ENCODE measurements at regions of chr16 and their contacts with region 1.

Region 1: GRCh38 chr16:4846891-4847773 is at the starts of genes GLYR1 and UBN1:
- DNase-seq: peak; percentile 97 to 99 (median 99)
- H3K4me3 ChIP-seq: peak within 1 kb of the TSS; percentile 73 to 100 (median 97)
- H3K27ac ChIP-seq: peak within 1 kb of the TSS; percentile 67 to 97 (median 91)
- H3K27me3 ChIP-seq: no peaks in the 10 kb centered on the region
- CTCF ChIP-seq: peak in 27 of 56 donors; percentile 3 to 51 (median 17)
- total RNA-seq, gene GLYR1: 91.8 to 145 (median 122) TPM
- total RNA-seq, gene UBN1: 21.8 to 36.9 (median 28.7) TPM

Region 2: GRCh38 chr16:4734063-4734729 is 112.9 kb before region 1 on chr16 and contains the starts of genes ANKS3 and DNAAF8:
- intact Hi-C with region 1: loop called in 1 of 2 experiments (anchors 10 kb)
- DNase-seq: peak; percentile 90 to 98 (median 98)
- H3K4me3 ChIP-seq: peak within 1 kb of the TSS; percentile 74 to 100 (median 96)
- H3K27ac ChIP-seq: peak within 1 kb of the TSS in 48 of 59 donors; percentile 14 to 88 (median 69)
- H3K27me3 ChIP-seq: no peaks in the 10 kb centered on the region
- CTCF ChIP-seq: peak in 17 of 56 donors; percentile 4 to 42 (median 19)
- total RNA-seq, gene ANKS3: 28.1 to 66.1 (median 44.0) TPM
- total RNA-seq, gene DNAAF8: 0.23 to 4.7 (median 1.5) TPM

Region 3: GRCh38 chr16:4766874-4767628 is 80.1 kb before region 1 on chr16 and contains the start of gene ZNF500:
- intact Hi-C with region 1: loop called in 1 of 2 experiments (anchors 2 kb)
- DNase-seq: peak; percentile 98 to 100 (median 99)
- H3K4me3 ChIP-seq: peak within 1 kb of the TSS; percentile 43 to 100 (median 97)
- H3K27ac ChIP-seq: peak within 1 kb of the TSS; percentile 74 to 98 (median 92)
- H3K27me3 ChIP-seq: no peaks in the 10 kb centered on the region
- CTCF ChIP-seq: peak in 32 of 56 donors; percentile 12 to 58 (median 32)
- total RNA-seq, gene ZNF500: 15.4 to 45.7 (median 25.2) TPM

Region 4: DNA sequence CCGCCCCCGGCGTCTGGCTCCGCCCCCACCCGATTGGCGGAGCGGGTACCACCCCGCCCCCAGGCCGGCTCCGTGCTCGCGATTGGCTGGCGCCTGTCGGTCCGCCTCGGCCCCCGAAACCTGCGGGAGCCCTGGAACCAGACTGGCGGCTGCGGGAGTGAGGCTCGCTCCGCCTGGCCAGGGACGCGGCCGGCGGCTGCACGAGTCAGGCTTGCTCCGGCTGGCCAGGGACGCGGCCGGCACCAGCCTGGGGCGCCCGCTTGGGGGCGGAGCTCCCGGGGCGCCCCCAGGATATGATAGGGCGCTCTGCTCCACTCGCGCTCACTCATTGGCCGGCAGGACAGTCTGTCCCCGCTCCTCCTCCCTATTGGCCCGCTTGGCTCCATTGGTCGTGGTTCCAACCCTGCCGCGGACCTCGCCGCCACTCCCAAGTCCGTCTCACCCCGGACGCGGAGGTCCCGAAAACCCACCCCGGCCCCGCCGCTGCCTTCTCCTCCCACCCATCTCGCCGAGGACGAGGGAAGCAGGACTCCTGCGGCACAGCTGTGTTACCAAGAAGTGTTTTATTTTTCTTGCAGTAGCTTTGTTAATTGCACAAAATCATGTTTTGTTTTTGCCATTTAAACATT is 44.4 kb before region 1 on chr16:
- intact Hi-C with region 1: loop called (anchors 2 to 5 kb)
- DNase-seq: peak; percentile 87 to 96 (median 94)
- H3K4me3 ChIP-seq: peak overlapping the region; percentile 64 to 97 (median 85)
- H3K27ac ChIP-seq: peak overlapping the region; percentile 56 to 99 (median 94)
- H3K27me3 ChIP-seq: no peaks in the 10 kb centered on the region
- CTCF ChIP-seq: peak in 53 of 56 donors; percentile 16 to 74 (median 52)

Region 5: GRCh38 chr16:4944333-4945281 is 97.5 kb after region 1 on chr16:
- intact Hi-C with region 1: no loop called
- DNase-seq: peak in 2 of 10 donors; percentile 37 to 71
- H3K4me3 ChIP-seq: no peak overlapping the region
- H3K27ac ChIP-seq: peak overlapping the region in 13 of 59 donors; percentile 1 to 72 (median 19)
- H3K27me3 ChIP-seq: peaks cover 0 to 28% (median 0%) of the 10 kb centered on the region in 45 donors
- CTCF ChIP-seq: no peak

Region 6: DNA sequence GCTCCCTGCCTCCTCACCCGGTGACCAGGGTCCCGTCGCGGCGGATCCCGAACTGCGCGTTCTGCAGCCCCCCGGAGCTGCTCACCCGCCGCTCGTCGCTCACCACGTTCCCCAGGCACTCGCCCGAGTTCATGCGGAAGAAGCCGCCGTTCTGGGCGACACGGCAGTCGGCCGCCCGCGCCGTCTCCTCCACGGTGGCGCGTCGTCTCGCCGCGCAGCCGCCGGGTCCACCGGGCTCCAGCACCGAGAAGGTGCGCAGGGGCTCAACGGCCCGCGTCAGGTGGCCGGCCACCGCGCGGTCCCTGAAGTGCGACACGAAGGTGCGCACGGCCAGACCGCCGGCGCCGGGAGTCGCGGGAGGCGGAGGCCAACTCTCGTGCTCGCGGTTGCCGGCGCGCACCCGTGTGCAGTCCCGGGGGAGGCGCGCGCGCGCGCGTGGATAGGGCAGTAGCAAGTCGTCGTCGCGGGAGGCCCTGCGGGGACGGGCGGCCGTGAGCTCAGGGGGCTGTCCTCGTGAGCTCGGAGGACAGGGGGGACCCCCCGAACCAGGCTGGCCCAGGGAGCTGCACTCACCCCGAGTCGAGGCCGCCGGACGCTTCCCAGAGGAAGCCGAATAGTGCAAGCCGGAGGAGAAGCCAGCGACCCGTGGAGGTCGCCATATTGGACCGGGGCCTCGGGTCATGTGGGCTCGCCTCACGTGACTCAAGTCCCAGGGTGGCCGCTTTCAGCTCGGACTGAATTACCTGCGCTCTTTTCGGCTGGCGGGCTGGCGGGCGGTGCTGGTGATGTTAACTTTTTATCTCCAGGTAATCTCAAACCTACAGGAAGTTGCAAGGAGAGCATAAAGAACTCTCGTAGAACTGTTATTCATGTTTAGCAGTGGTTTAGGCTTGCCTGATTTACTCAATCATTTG is 186.4 kb after region 1 on chr16 and contains the start of gene NAGPA:
- intact Hi-C with region 1: loop called (anchors 5 to 10 kb)
- DNase-seq: peak; percentile 92 to 97 (median 94)
- H3K4me3 ChIP-seq: peak within 1 kb of the TSS; percentile 38 to 97 (median 85)
- H3K27ac ChIP-seq: peak within 1 kb of the TSS in 58 of 59 donors; percentile 7 to 92 (median 80)
- H3K27me3 ChIP-seq: no peaks in the 10 kb centered on the region
- CTCF ChIP-seq: peak in 26 of 56 donors; percentile 6 to 50 (median 28)
- total RNA-seq, gene NAGPA: 29.1 to 81.0 (median 49.0) TPM

Region 7: DNA sequence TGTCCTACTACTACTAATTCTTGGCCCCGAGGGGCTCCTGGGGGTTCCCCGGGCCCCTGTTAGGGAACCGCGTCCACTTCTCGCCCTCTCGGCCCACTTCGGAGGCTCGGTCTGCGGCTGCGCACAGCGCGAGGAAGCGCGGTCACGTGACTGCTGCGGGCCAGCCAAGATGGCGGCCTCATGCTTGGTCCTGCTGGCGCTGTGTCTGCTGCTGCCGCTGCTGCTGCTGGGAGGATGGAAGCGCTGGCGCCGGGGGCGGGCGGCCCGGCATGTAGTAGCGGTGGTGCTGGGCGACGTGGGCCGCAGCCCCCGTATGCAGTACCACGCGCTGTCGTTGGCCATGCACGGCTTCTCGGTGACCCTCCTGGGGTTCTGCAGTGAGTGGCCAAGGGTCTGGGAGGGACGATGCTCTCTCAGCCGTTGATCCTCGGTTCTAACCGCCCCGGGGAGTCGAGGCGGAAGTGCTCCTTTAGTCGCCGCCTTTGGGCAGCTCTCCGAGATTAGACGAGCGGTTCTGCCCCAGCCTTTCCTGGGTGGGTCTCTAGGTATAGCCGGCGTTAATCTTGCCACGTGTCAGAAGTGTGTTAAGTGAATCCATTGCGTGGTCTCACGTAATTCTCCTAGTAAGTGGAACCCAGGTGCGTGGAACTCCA is 224.7 kb after region 1 on chr16 and contains the start of gene ALG1:
- intact Hi-C with region 1: loop called in 1 of 2 experiments (anchors 10 kb)
- DNase-seq: peak; percentile 83 to 94 (median 86)
- H3K4me3 ChIP-seq: peak within 1 kb of the TSS; percentile 54 to 95 (median 75)
- H3K27ac ChIP-seq: peak within 1 kb of the TSS; percentile 50 to 95 (median 89)
- H3K27me3 ChIP-seq: no peaks in the 10 kb centered on the region
- CTCF ChIP-seq: peak in 32 of 56 donors; percentile 4 to 53 (median 28)
- total RNA-seq, gene ALG1: 14.4 to 28.9 (median 21.0) TPM